K562 (cell line): ENCODE measurements at regions of chr17 and their contacts with region 1.

Region 1: DNA sequence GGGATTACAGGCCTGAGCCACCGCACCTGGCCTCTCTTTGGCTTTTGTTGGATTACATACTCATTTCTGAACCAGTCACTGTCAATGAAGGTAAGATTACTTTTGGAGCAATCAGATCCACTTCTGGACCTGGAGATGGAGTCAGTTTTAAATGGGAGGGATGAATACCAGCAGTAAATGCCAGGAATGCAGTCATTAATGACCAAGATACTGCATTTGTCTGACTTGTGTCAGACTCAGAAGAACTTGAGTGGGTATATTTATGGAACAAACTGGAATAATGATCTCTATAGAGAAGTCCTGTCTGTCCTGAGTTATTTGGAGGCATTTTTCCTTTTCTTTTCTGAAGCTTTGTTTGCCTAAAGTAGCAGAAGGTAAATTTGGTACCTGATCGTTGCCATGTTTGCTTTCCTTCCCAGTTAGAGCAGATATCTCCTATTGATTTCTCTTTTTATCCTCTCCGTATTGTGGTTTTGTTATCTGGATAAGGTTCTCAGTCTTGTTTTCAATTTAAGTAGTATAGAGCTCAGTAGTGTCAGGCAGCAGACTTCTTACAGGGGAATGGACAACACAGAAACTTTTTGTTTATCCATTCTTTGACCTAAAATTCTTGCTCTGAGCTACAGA is 10.7 kb downstream of the NLK start:
- DNase-seq: no peak
- ATAC-seq: peak; percentile 34; the same call in 1 of the 3 replicates
- H3K4me3 ChIP-seq: no peak overlapping the region
- H3K27ac ChIP-seq: no peak overlapping the region
- H3K4me1 ChIP-seq: peaks cover 0 to 21% of the 10 kb centered on the region in 2 experiments; a peak in 4 of 5 replicates
- H3K27me3 ChIP-seq: no peaks in the 10 kb centered on the region
- CTCF ChIP-seq: no peak
- EP300 ChIP-seq: no peak
- POLR2A ChIP-seq: no peak
- RAD21 ChIP-seq: no peak

Region 2: GRCh38 chr17:27980043-27980442 is 73.1 kb before region 1 on chr17:
- CTCF ChIA-PET with region 1: no interaction called
- POLR2A ChIA-PET with region 1: no interaction called
- in situ Hi-C with region 1: no loop called
- intact Hi-C with region 1: no loop called
- DNase-seq: no peak
- ATAC-seq: no peak
- H3K4me3 ChIP-seq: no peak overlapping the region
- H3K27ac ChIP-seq: no peak overlapping the region
- H3K4me1 ChIP-seq: peaks cover 27 to 64% of the 10 kb centered on the region in 2 experiments
- H3K27me3 ChIP-seq: no peaks in the 10 kb centered on the region
- CTCF ChIP-seq: no peak
- EP300 ChIP-seq: no peak
- POLR2A ChIP-seq: no peak
- RAD21 ChIP-seq: no peak

Region 3: GRCh38 chr17:28008542-28008941 is 44.6 kb before region 1 on chr17:
- CTCF ChIA-PET with region 1: no interaction called
- POLR2A ChIA-PET with region 1: no interaction called
- in situ Hi-C with region 1: no loop called
- intact Hi-C with region 1: no loop called
- DNase-seq: peak; percentile 59 to 77 (median 70)
- ATAC-seq: peak; percentile 89
- H3K4me3 ChIP-seq: no peak overlapping the region
- H3K27ac ChIP-seq: no peak overlapping the region
- H3K4me1 ChIP-seq: no peaks in the 10 kb centered on the region
- H3K27me3 ChIP-seq: peaks cover 0 to 8% of the 10 kb centered on the region in 2 experiments; a peak in 2 of 5 replicates
- CTCF ChIP-seq: peak in 1 of 3 experiments; percentile 31; a peak in 2 of 6 replicates
- EP300 ChIP-seq: no peak
- POLR2A ChIP-seq: no peak
- RAD21 ChIP-seq: peak in 1 of 2 experiments; percentile 51; a peak in 2 of 4 replicates

Region 4: GRCh38 chr17:28065706-28066105 is 12.5 kb after region 1 on chr17:
- CTCF ChIA-PET with region 1: interaction called, 4 read pairs
- POLR2A ChIA-PET with region 1: interaction called, 12 read pairs
- in situ Hi-C with region 1: no loop called
- intact Hi-C with region 1: no loop called
- DNase-seq: no peak
- ATAC-seq: peak; percentile 26; the same call in 1 of the 3 replicates
- H3K4me3 ChIP-seq: no peak overlapping the region
- H3K27ac ChIP-seq: peak overlapping the region; percentile 31; the same call in 1 of the 3 replicates
- H3K4me1 ChIP-seq: peaks cover 6 to 12% of the 10 kb centered on the region in 2 experiments; a peak in 4 of 5 replicates
- H3K27me3 ChIP-seq: no peaks in the 10 kb centered on the region
- CTCF ChIP-seq: no peak
- EP300 ChIP-seq: no peak
- POLR2A ChIP-seq: no peak
- RAD21 ChIP-seq: no peak